ENCODE measurements at regions of chrX and their contacts with region 1.

Region 1: DNA sequence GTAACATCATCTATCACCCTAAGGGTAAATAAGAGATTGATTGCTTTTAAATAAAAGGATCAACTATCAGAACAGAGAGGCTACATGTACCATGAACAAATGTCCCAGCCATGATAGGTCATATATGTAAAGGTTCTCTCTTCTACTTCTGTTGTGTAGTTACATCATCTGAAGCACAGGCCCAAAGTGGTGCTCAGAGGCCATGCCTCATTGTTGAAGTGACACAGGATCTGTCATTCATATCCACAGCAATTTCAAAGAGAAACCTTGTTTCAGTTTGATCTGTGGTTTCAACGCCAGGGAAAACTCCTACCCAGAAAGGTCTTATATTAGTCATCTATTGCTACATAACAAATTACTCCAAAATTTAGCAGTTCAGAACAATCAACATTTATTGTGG is 269.2 kb upstream of the MAOA start:
- DNase-seq: no peak

Region 2: DNA sequence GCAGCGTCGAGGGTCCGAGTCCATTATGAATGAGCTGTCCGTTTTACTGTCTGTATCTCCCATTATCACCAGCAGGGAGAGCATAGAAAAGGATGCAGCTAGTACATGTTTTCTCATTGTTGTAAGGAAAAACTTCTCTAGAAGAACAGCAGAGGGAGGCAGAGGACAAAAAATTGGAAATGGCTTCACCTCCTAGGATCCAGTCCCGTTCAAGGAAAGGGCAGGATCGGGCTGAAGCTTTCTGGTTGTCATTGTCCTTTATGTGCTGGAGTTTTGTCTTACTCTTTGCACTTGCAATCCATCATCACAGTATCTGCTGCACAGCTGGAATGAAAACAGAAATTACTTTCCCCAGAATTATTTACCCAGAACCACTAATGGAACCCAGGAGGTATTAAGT is 571.7 kb after region 1 on chrX:
- intact Hi-C with region 1: loop called in 1 of 2 experiments (anchors 5 kb)
- DNase-seq: no peak